HEK293 (cell line): ENCODE measurements at regions of chr2 and their contacts with region 1.

Region 1: DNA sequence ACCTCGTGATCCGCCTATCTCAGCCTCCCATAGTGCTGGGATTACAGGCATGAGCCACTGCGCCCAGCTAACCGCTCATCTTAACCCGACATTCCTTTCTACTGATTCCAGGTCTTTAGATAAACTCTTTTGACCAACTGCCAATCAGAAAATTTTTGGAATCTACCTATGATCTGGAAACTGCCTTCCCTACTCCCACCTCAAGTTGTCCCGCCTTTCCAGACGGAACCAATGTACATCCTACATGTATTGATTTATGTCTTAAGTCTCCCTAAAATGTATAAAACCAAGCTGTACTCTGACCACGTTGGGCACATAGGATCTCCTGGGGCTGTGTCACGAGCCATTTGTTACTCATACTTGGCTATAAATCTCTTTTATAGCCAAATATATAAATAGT is 3.2 kb upstream of the NEU2 start:
- H3K4me3 ChIP-seq: no peak overlapping the region
- H3K27ac ChIP-seq: no peak overlapping the region
- H3K4me1 ChIP-seq: no peaks in the 10 kb centered on the region
- CTCF ChIP-seq: no peak

Region 2: DNA sequence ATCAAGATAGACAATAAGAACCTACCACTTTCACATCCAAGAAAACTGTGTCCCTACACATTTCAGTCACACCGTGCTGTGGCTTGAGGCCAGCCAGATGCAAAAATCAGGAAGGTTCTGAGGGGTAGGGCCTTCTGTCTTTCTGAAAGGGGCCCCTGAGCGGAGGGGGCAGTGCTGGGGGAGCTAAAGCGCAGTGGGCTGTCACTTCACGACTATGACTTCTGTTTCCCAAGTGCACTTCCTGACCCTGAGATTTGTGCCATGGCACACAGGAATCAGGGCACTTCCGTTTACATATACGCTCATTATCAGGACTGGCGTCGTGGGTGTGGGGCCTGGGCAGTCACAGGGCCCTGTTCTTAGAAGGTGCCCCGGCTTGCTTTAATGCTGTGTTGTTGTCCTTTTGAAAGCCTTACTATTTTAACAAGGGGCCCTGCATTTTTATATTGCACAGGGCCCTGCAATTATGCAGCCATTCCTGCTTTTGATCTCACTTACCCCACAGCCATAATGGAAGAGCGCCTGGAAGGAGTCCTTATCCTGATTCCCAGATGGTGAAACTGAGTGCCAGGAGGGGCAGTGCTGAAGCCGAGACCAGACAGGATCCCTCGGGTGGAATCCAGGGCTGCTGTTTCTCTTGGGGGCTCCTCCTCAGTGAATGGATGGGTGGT is 16.9 kb before region 1 on chr2:
- CTCF ChIA-PET with region 1: interaction called, 11 read pairs
- POLR2A ChIA-PET with region 1: no interaction called
- H3K4me3 ChIP-seq: no peak overlapping the region
- H3K27ac ChIP-seq: no peak overlapping the region
- H3K4me1 ChIP-seq: no peaks in the 10 kb centered on the region
- CTCF ChIP-seq: no peak

Region 3: DNA sequence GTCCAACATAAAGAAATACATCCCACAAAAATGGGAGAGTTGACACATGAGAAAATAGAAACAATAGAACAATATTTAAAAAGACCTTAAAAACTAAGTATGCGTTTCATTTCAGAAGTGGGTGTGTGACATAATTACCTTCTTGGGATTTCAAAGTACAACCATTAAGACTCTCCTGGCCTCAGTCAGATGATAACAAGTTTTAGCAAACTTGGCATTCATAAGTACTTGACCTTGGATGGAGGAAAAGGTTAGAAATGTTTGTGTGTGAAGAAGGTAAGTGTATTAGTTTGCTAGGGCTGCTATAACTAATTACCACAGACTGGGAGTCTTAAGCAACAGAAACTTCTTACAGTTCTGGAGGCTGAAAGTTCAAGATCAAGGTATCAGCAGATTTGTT is 11.4 kb before region 1 on chr2:
- CTCF ChIA-PET with region 1: interaction called, 11 read pairs
- POLR2A ChIA-PET with region 1: no interaction called
- H3K4me3 ChIP-seq: no peak overlapping the region
- H3K27ac ChIP-seq: no peak overlapping the region
- H3K4me1 ChIP-seq: no peaks in the 10 kb centered on the region
- CTCF ChIP-seq: no peak

Region 4: DNA sequence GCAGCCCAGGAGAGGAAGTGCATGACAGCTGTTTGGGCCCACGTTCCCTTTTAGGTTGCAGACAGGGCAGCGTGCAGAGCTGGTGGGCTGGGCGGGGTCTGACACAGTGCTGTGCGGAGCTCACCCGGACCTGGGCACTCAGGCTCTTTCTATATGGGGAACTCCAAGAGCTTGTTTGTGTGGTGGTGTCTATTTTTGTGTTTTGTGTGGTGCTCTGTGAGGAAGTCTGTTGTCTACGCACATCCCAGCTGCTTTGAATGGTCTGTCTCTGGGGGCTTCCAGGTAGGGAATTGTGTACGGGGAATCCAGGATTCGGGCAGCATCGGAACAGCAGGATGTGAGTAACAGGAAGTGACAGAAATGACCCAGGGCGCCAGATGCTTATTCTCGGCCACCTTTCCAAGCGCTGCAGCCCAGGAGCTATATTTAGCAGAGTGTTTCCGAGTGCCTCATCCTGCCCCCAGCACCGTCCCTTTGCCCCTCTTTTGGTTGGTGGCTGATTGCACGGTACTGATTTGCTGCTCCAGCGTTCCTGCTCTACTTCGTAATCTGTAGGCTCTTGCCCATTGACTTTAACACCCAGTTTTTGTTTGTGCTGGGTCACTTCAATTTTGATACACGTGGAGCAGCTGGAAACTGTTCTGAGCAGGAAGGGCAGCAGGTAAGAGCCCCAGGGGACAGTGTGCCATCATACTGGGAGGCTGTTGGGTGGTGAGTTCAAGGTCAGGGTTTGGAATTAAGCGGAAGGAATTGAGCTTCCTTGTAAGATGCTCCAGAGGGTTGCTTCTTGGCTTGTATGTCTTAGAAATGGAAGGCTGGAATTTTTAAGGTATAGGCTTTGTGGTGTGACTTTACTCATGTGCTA is 389.7 kb after region 1 on chr2:
- CTCF ChIA-PET with region 1: no interaction called
- POLR2A ChIA-PET with region 1: no interaction called
- H3K4me3 ChIP-seq: no peak overlapping the region
- H3K27ac ChIP-seq: no peak overlapping the region
- H3K4me1 ChIP-seq: peaks cover 6% of the 10 kb centered on the region; the same call in 1 of the 2 replicates
- CTCF ChIP-seq: no peak